ENCODE measurements at regions of chr11 and their contacts with region 1.

Region 1: DNA sequence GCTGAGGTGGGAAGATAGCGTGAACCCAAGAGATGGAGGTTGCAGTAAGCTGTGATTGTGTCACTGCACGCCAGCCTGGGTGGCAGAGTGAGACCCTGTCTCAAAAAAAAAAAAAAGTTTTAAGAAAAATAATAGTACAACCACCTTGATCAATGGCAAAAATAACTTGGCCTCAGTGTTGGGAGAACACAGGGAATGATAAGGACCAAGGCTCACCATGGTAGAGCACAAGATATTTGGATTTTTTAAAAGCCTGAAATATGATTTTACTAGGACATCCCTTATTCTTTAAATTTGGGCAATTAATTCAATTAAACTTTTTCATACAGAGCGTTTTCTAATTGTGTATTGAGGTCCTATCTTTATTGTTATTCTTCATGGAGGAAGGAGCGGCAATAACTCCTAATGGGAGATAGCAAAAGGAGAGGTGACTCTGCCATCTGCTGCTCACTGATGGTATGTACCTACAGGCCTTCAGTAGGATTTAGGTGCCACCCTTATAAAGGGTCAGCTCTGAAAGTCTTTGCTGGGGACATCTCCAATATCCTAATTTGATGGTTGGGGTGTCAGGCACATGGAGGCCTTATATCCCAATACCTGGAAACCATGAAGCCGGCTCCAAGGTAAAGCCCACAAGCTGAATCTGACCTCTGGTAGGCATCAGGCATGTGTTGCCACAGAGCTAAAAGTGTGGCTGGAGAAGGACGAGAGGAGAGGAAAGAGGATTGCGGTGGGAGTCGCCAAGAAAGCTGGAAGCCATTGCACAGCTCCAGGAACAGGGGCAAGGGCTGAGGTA is 21.9 kb upstream of the POLD3 start:
- DNase-seq: peak in 1 of 2 experiments; percentile 50
- H3K4me3 ChIP-seq: no peak overlapping the region
- H3K27ac ChIP-seq: no peak overlapping the region
- H3K4me1 ChIP-seq: no peaks in the 10 kb centered on the region
- H3K27me3 ChIP-seq: no peaks in the 10 kb centered on the region
- CTCF ChIP-seq: peak; percentile 13 to 81 (median 73)
- EP300 ChIP-seq: no peak
- POLR2A ChIP-seq: no peak
- RAD21 ChIP-seq: peak; percentile 90 to 93

Region 2: DNA sequence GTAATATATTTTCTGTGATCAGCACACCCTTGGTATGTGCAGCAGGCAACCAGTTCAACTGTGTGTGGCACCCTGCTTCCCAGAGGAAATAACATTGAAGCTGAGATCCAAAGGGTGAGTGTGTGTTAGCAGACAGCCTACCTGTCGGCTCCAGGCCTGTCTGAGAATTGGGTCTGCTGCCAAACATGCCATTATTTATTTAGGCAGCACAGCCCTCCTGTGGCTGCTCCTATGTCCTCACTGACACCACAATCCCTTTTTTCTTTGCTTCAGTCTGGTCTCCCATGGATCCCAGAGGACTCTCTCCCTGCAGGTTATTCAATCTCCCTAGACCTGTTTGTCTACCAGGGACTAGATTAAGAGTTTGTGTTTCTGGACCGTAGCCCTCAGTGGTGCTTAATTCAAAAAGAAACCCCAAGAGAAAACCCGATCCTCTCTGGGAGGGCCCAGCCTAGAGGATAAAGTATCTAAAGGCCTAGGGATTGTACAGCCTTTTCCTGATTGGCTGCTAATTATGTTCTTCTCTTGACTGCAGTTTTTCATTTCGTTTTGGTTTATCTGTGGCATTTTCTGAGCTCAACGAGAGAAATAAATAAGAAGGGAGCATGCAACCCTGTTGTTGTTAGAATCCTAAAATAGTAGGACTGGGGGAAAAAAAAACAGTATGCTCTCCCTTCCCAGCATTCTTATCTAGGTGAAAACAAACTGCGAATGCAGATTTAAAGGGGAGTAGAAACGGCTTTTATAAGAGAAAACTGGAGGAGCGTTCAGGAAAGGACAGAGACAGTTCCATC is 127.2 kb before region 1 on chr11:
- CTCF ChIA-PET with region 1: interaction called, 291 read pairs
- POLR2A ChIA-PET with region 1: interaction called, 3 read pairs
- DNase-seq: no peak
- H3K4me3 ChIP-seq: no peak overlapping the region
- H3K27ac ChIP-seq: no peak overlapping the region
- H3K4me1 ChIP-seq: peaks cover 0 to 7% (median 4%) of the 10 kb centered on the region in 4 experiments; a peak in 4 of 7 replicates
- H3K27me3 ChIP-seq: no peaks in the 10 kb centered on the region
- CTCF ChIP-seq: peak in 1 of 3 experiments; percentile 12; a peak in 1 of 4 replicates
- EP300 ChIP-seq: no peak
- POLR2A ChIP-seq: no peak
- RAD21 ChIP-seq: peak; percentile 41 to 49

Region 3: DNA sequence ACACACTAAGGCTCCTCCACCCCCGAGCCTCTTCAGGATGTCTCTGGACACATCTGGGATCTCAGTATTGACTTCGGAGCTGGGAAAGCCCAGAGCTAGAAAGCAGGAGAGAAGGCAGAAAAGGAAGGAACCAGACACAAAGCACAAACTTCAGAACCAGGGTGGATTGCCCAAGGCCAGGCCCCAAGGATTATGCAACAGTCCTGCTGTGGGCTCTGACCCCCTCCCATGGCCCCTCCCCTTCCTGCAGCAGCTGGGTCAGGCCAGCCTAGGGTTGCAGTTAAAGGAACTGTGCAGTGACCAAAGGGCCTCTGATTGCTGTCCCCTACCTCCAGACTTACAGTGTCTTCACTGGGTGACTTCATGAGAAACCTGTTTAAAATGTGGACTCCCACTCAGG is 108.5 kb before region 1 on chr11:
- CTCF ChIA-PET with region 1: interaction called, 19 read pairs
- POLR2A ChIA-PET with region 1: no interaction called
- DNase-seq: no peak
- H3K4me3 ChIP-seq: no peak overlapping the region
- H3K27ac ChIP-seq: peak overlapping the region; percentile 10; the same call in 1 of the 2 replicates
- H3K4me1 ChIP-seq: peaks cover 0 to 8% (median 4%) of the 10 kb centered on the region in 4 experiments; a peak in 5 of 7 replicates
- H3K27me3 ChIP-seq: peaks cover 0 to 4% (median 0%) of the 10 kb centered on the region in 4 experiments; a peak in 3 of 7 replicates
- CTCF ChIP-seq: no peak
- EP300 ChIP-seq: no peak
- POLR2A ChIP-seq: no peak
- RAD21 ChIP-seq: no peak

Region 4: DNA sequence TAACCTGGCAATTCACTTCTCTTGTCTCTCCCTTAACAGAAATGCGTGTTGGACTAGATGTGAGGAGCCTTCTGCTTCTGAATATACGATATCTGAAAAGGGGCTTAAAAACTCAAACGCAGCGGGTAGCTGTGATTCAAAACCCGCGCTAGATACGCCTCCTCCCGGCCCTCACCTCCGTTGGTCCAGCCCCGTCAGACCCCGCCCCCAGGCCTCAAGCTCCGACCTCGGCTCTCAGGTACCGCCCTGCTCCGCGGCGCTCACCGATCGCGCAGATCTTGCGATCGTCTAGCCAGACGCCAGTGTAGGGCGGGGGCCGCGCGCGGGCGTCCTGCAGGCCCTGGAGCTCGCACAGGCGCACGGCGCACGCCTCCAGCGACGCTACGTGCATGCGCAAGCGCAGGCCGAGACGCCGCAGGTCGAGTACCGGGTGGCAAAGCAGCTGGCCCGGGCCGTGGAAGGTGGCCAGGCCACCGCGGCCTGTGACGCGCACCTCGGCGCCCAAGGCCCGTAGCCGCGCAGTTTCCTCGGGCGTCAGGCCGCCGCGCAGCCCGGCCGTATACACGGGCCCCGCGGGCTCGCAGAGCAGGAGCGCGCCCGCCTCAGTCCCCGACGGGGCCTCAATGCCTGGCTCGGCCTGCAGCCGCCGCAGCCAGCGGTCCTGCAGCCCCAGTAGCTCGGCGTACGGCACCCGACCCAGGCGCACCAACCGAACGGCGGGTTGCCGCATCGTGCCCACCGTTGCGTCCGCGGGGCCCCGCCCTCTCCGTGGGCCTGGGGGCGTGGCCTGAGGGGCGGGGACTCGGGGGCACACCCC is 77.3 kb before region 1 on chr11 and contains the start of gene LIPT2:
- CTCF ChIA-PET with region 1: interaction called, 27 read pairs
- POLR2A ChIA-PET with region 1: no interaction called
- DNase-seq: peak; percentile 94 to 96
- H3K4me3 ChIP-seq: peak within 1 kb of the TSS; percentile 61 to 81 (median 74)
- H3K27ac ChIP-seq: peak within 1 kb of the TSS; percentile 91
- H3K4me1 ChIP-seq: peaks cover 0 to 7% (median 4%) of the 10 kb centered on the region in 4 experiments; a peak in 4 of 7 replicates
- H3K27me3 ChIP-seq: no peaks in the 10 kb centered on the region
- CTCF ChIP-seq: no peak
- EP300 ChIP-seq: no peak
- POLR2A ChIP-seq: peak; percentile 87 to 91
- RAD21 ChIP-seq: no peak
- total RNA-seq, gene LIPT2: 6.4 and 7.7 TPM in 2 replicates

Region 5: GRCh38 chr11:74559110-74559933 is 11.1 kb before region 1 on chr11:
- CTCF ChIA-PET with region 1: interaction called, 28 read pairs
- POLR2A ChIA-PET with region 1: no interaction called
- DNase-seq: no peak
- H3K4me3 ChIP-seq: no peak overlapping the region
- H3K27ac ChIP-seq: no peak overlapping the region
- H3K4me1 ChIP-seq: no peaks in the 10 kb centered on the region
- H3K27me3 ChIP-seq: no peaks in the 10 kb centered on the region
- CTCF ChIP-seq: no peak
- EP300 ChIP-seq: no peak
- POLR2A ChIP-seq: no peak
- RAD21 ChIP-seq: no peak

Region 6: DNA sequence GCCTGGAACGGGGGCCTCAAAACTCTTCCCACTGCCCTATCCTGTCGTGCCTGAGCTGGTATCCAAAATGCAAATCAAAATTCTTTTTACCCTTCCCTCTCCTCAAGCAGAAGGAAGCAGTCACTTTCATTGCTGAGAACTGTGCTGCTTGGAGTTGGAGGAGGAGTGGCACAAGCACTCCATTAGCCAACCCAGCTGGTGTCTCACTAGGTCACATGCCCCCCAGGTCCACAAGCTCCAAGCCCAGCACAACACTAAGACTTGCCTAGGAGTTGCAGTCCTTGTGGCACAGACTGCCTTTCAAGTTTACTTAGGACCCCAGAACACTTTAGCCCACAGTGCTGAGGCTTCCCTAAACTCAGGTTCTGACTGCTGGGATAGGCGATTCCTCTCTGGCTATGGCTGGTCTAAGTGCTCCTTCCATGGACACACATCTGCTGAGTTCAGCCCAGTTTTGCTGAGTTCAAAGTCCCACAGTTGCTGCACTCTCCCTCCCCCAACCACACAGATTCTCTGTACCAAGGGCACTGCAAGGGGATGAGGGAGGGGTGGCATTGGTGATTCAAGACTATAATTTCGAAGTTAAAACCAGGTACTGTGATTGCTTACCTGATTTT is 92.1 kb after region 1 on chr11:
- CTCF ChIA-PET with region 1: no interaction called
- POLR2A ChIA-PET with region 1: no interaction called
- DNase-seq: no peak
- H3K4me3 ChIP-seq: no peak overlapping the region
- H3K27ac ChIP-seq: no peak overlapping the region
- H3K4me1 ChIP-seq: 0 out of 7 replicates have a peak, but pooled peaks cover 0 to 4% (median 0%) of the 10 kb centered on the region in 4 experiments
- H3K27me3 ChIP-seq: no peaks in the 10 kb centered on the region
- CTCF ChIP-seq: no peak
- EP300 ChIP-seq: no peak
- POLR2A ChIP-seq: no peak
- RAD21 ChIP-seq: no peak

Measured in H1 (cell line).